Gastrocnemius medialis (tissue), 4 donors: ENCODE measurements at regions of chr5 and their contacts with region 1.

Region 1: DNA sequence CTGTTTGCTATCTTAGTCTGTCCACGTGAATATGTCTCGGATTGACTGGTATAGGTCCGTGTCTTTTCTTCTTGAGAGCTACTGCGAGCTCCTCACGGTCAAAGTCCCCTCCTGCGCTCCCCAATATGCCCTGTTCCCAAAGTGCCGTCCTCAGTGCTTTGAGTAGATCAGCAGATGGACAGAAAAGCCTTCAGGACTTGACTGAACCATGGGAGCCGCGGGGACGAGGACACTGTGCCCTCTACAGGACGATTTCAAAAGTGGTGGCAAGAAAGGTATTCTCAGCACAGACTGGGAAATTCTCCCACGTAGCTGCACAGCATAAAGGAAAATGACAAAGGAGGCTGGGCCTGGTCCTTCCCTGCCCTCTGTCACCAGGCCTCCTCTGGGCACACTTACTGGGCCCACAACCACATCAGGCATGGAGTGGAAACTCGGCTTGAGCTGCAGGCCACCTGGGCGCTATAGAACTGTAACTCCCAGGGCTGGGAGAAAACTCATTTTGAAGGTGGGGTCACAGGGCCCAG is 16.6 kb upstream of the MTMR12 start:
- DNase-seq: peak; percentile 28 to 46
- ATAC-seq: peak; percentile 90 to 92
- H3K4me3 ChIP-seq: no peak overlapping the region
- H3K27ac ChIP-seq: no peak overlapping the region
- H3K4me1 ChIP-seq: no peaks in the 10 kb centered on the region
- H3K27me3 ChIP-seq: no peaks in the 10 kb centered on the region
- CTCF ChIP-seq: peak; percentile 29 to 73 (median 60)
- POLR2A ChIP-seq: no peak

Region 2: DNA sequence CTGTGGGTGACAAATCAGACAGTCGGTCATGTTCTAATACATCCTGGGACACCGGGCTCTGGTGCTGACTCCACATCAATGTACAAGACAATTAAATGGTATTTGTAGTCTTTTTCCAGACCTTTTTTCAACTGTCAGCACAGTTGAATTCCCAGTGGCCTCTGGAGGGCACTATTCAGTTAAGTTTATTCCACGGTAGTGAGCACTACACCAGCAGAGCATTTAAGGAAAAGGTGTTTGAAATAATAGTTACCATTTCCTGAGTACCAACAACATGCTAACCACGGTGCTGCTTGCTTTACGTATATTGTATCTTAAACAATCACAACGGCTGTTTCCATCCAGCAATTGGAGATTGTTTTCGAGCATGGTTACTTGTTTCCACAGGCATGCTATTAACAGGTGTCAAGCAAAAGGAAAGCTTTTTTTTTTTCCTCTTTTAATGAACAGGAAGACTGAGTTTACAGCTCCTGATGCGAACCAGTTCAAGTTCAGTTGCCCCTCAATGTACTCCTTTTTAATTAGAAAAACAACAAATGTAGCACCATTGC is 503.8 kb before region 1 on chr5:
- in situ Hi-C with region 1: loop called in 1 of 4 experiments (anchors 25 kb)
- intact Hi-C with region 1: no loop called
- DNase-seq: no peak
- ATAC-seq: peak; percentile 74 to 75
- H3K4me3 ChIP-seq: no peak overlapping the region
- H3K27ac ChIP-seq: no peak overlapping the region
- H3K4me1 ChIP-seq: no peaks in the 10 kb centered on the region
- H3K27me3 ChIP-seq: no peaks in the 10 kb centered on the region
- CTCF ChIP-seq: peak; percentile 45 to 69 (median 56)
- POLR2A ChIP-seq: no peak